Activated naive CD4-positive, alpha-beta T cell treated with anti-CD3 and anti-CD28 coated beads for 36 hours (primary cell): ENCODE measurements at regions of chr15 and their contacts with region 1.

Region 1: DNA sequence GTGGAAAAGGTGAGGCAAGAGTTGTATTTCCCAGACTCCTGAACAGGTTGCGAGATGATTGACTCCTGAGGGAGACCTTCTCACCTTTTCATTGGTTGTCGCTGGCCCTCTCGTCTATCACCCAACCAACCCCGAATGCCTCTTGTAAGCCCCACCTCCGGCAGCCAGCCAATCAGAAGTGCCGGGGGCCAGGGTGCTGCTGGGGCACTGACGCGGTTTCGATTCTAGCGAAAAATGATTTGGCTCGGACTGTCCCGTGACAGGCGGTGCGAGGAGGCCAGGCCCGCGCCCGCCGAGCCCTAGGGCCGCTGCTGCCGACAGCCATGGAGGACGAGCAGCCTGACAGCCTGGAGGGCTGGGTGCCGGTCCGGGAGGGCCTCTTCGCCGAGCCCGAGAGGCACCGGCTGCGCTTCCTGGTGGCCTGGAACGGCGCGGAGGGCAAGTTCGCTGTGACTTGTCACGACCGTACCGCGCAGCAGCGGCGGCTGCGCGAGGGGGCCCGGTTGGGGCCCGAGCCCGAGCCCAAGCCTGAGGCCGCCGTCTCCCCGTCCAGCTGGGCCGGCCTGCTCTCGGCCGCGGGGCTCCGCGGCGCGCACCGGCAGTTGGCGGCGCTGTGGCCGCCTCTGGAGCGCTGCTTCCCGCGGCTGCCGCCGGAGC is at the start of gene WHAMM:
- DNase-seq: peak; percentile 97
- H3K4me3 Mint-ChIP-seq: peak within 1 kb of the TSS; percentile 87
- H3K27ac Mint-ChIP-seq: peak within 1 kb of the TSS; percentile 86
- H3K4me1 Mint-ChIP-seq: peaks cover 26% of the 10 kb centered on the region
- H3K27me3 Mint-ChIP-seq: no peaks in the 10 kb centered on the region
- total RNA-seq, gene WHAMM: 3.7 to 5.7 TPM

Region 2: GRCh38 chr15:81296673-81297072 is 1512.9 kb before region 1 on chr15:
- CTCF ChIA-PET with region 1: no interaction called
- intact Hi-C with region 1: loop called (anchors 10 kb)
- DNase-seq: peak; percentile 90
- H3K4me3 Mint-ChIP-seq: peak overlapping the region; percentile 93
- H3K27ac Mint-ChIP-seq: peak overlapping the region; percentile 99
- H3K4me1 Mint-ChIP-seq: peaks cover 66% of the 10 kb centered on the region
- H3K27me3 Mint-ChIP-seq: no peaks in the 10 kb centered on the region

Region 3: DNA sequence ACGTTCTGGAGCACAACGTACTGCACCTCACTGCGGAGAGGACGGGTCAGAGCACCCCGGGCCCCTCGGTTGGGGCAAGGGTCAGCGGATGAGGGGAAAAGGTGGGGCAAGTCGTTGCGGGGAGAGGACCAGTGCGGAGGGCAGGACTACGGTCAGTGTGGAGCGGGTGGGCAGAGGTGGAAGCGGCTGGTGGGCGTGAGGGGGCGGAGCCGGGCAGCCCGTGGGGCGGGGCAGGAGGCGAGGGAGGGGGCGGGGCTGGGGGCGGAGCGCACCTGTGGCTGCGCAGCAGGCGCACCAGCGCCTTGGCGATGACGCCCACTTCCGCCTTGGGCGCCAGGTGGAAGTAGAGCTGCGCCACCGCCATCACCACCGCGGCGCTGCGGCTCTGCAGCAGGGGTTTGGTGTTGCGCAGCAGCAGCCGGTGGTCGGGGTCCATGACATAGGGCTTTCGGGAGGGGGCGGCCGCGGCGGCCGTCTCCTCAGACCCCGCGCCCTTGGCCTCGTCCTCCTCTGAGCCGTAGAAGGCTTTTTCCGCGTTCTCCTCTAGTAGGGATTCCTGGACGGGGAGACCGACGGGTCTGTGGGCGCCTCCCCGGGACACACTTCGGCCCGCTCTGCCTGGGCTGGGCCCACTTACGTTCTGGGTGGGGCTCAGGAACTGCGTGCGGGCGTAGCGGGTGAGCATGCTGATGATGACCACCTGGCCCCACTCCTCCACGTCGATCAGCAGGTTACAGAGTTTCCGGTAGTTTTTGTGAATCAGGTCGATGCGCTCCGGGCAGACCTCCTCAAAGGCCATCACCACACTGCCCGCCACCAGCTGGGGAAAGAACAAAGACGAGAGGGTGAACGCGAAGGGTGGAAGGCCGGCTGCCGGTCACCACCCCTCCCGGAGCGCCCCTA is 129.1 kb before region 1 on chr15:
- CTCF ChIA-PET with region 1: no interaction called
- intact Hi-C with region 1: loop called (anchors 1 kb)
- DNase-seq: peak; percentile 86
- H3K4me3 Mint-ChIP-seq: peak overlapping the region; percentile 88
- H3K27ac Mint-ChIP-seq: peak overlapping the region; percentile 47
- H3K4me1 Mint-ChIP-seq: peaks cover 7% of the 10 kb centered on the region
- H3K27me3 Mint-ChIP-seq: peaks cover 2% of the 10 kb centered on the region

Region 4: DNA sequence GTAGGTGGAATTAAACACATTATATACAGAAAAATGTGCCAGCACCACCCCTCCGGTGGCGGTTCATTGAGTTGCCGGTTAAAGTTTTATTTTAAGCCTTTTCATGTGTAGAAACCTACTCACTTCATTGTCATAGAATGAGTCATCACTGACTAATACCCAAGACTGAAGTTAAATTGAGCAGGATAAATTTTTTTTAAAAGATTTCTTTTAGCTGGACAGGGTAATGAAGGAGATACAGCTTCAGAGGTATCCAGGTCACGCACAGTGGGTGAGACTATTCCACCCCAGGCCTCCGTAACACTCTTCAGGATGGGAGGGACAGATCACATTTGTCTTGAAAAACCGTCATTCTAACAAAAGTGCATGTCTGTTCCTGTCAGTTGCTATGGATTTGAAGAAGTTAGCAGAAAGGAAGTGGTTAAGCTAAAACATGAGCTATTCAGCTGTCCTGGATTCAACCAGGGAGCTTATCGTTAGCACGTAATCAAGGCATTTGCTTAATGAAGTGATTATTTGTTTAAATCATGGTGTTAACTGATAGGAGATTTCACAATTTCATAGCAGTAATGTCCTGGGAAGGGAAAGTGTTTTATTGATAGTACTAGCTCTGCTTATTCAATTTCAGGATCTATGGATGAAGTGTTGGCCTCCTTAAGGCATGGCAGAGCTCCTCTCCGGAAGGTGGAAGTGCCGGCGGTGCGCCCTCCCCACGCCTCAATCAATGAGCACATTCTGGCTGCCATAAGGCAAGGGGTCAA is 23.2 kb after region 1 on chr15:
- CTCF ChIA-PET with region 1: interaction called, 3 read pairs
- intact Hi-C with region 1: loop called (anchors 1 kb)
- DNase-seq: peak; percentile 74
- H3K4me3 Mint-ChIP-seq: no peak overlapping the region
- H3K27ac Mint-ChIP-seq: peak overlapping the region; percentile 46
- H3K4me1 Mint-ChIP-seq: peaks cover 27% of the 10 kb centered on the region
- H3K27me3 Mint-ChIP-seq: no peaks in the 10 kb centered on the region

Region 5: DNA sequence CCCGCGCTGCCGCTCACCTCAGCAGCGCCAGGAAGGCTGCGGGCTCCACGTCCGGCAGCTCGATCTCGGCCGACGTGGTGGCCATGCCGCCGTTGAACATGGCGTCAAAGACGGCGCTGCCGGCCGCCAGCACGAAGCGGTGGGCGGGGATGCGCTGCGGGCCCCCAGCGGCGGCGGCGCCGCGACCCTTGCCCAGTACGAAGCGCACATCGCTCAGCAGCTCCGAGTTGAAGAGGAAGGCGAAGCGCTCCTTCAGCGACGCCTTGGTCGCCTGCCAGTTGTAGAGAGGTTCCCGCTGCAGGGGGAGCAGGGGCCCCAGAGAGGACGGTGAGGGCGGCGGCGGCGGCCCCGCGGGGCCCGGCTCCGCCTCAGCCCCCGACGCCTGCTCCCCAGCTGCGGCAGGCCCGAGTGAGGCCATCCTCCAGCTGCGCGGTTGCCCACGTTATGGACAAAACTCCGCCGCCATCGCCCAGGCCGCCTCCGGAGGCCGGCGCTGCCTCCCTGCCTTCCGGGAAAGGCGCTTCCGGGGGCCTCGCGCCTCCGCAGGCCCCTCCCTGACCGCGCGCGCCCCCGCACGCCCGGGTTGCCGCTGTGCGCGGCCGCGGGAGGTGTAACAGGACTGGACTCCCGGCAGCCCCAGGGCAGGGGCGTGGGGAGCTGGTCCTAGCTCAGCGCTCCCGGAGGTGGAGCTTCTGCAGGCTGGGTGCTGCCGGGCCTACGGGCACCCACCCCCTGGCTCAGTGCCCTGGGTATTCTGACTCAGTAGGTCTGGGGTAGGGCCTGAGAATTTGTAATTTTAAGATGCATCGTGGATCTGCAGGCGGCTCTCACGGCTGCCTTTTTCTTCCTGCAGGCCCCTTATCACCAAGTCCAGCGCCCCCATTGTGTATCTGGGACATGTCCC is 257.5 kb after region 1 on chr15 and contains the start of gene BTBD1:
- CTCF ChIA-PET with region 1: no interaction called
- intact Hi-C with region 1: loop called (anchors 1 kb)
- DNase-seq: peak; percentile 92
- H3K4me3 Mint-ChIP-seq: peak within 1 kb of the TSS; percentile 84
- H3K27ac Mint-ChIP-seq: peak within 1 kb of the TSS; percentile 83
- H3K4me1 Mint-ChIP-seq: peaks cover 22% of the 10 kb centered on the region
- H3K27me3 Mint-ChIP-seq: no peaks in the 10 kb centered on the region
- total RNA-seq, gene BTBD1: 45.2 to 46.1 TPM

Region 6: DNA sequence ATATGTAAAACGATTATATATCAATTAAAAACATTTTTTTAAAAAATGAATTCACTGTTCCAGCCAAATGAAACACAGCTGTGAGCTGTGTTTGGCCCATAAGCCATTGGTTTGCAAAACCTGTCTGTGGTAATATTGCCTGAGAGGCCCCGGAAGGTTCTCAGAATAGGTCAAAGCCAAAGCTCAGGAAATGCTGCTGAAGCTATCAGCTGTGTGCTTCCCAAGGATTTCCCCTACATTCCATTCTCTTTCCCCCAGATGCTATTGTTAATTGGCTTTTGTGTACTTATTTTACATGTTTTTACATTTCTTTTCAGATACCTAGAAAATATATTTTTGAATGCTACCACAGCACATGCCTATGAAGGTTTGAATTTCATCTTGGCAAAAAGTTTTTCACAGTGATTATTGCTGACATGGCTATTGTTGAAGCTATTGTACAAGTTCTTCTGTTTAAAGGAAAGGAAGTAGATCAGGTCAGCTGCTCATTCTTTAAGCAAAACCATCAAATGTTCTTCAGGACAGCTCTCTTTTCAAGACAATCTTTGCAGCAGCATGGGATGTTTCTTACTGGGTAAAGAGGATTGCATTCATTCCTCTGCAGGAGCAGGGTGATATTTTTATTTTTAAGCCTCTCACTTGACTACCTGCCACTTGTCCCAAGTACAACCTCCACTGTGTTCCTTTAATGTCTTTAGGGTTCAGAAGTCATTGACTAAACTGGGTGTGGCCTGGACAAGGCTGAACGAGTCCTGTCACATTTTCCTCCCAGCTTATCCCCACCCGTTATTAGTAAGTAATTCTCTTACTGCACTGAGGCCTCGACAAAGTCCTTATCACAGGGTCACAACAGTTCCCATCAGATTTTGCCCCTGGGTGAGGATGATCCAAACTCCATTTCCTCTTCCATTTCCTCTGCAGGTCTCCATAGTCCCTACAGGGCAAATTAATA is 501.3 kb after region 1 on chr15:
- CTCF ChIA-PET with region 1: no interaction called
- intact Hi-C with region 1: no loop called
- DNase-seq: no peak
- H3K4me3 Mint-ChIP-seq: no peak overlapping the region
- H3K27ac Mint-ChIP-seq: no peak overlapping the region
- H3K4me1 Mint-ChIP-seq: no peaks in the 10 kb centered on the region
- H3K27me3 Mint-ChIP-seq: no peaks in the 10 kb centered on the region